ENCODE measurements at regions of chr4 and their contacts with region 1.

Region 1: GRCh38 chr4:27318743-27319142 is 458.1 kb downstream of the STIM2 start:
- DNase-seq: peak; percentile 17
- ATAC-seq: no peak
- H3K4me3 ChIP-seq: no peak overlapping the region
- H3K27ac ChIP-seq: no peak overlapping the region
- H3K4me1 ChIP-seq: no peaks in the 10 kb centered on the region
- H3K27me3 ChIP-seq: no peaks in the 10 kb centered on the region
- CTCF ChIP-seq: peak; percentile 41
- POLR2A ChIP-seq: no peak
- RAD21 ChIP-seq: peak; percentile 54

Region 2: DNA sequence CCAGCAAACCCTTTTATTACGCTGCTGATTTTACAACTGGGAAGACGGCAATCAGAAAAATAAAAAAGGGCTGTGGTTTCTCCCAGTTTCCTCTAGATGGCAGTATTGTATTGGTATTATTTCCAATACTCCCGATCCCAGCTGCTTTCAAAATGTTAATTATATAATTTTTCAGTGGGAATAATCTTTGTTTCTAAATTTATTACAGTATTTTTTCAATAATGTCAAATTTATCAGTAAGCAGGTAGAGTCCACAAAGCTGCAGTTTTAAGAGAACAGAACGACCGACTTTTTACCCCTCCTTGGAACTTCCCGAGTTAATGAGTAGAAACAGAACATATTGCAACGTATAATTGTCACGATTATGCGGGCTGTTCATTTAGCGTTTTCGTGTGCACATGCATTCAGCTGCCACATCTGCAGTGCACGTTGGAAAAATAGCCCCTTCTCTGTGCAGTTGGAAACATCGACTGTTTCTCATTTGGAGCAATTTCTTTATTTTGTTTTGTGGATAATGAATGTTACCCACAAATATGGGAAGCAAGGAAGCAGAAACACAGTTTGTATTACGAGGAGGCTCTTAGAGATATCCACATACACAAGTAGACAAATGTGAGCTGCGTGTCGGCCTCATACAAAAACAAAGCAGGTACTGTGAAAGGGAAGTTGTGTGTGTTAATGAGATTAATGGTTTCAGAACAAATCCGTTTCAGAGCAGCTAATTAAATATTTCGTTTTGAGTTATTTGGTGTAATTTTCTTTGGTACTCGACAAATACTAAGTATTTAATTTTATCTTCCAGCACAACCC is 270.1 kb before region 1 on chr4:
- CTCF ChIA-PET with region 1: no interaction called
- POLR2A ChIA-PET with region 1: no interaction called
- dilution Hi-C with region 1: no loop called
- in situ Hi-C with region 1: no loop called
- intact Hi-C with region 1: loop called (anchors 2 kb)
- DNase-seq: peak; percentile 27
- ATAC-seq: peak; percentile 76
- H3K4me3 ChIP-seq: peak overlapping the region; percentile 44
- H3K27ac ChIP-seq: no peak overlapping the region
- H3K4me1 ChIP-seq: no peaks in the 10 kb centered on the region
- H3K27me3 ChIP-seq: peaks cover 28% of the 10 kb centered on the region
- CTCF ChIP-seq: peak; percentile 76
- POLR2A ChIP-seq: no peak
- RAD21 ChIP-seq: peak; percentile 71

Region 3: GRCh38 chr4:27176400-27176799 is 142.3 kb before region 1 on chr4:
- CTCF ChIA-PET with region 1: no interaction called
- POLR2A ChIA-PET with region 1: no interaction called
- dilution Hi-C with region 1: no loop called
- in situ Hi-C with region 1: no loop called
- intact Hi-C with region 1: loop called (anchors 2 kb)
- DNase-seq: peak; percentile 41
- ATAC-seq: no peak
- H3K4me3 ChIP-seq: no peak overlapping the region
- H3K27ac ChIP-seq: no peak overlapping the region
- H3K4me1 ChIP-seq: no peaks in the 10 kb centered on the region
- H3K27me3 ChIP-seq: no peaks in the 10 kb centered on the region
- CTCF ChIP-seq: peak; percentile 43
- POLR2A ChIP-seq: no peak
- RAD21 ChIP-seq: peak; percentile 60

Region 4: DNA sequence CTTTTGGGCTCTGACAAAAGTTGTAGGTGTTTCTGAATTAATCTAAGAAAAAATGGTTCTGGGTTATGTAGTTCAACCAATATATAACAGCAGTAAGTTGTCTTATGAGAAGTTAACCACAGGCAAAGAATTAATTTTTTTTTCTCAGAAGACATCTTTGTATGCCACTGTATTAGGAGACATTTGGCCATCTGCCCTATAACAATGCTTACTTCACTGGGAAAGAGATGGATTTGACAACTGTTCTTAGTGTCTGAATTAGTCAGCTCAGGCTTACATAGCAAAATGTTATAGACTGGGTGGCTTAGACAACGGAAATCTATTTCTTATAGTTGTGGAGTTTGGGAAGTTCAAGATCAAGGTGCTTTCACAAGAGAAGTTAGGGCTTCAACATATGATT is 50.0 kb after region 1 on chr4:
- CTCF ChIA-PET with region 1: no interaction called
- POLR2A ChIA-PET with region 1: no interaction called
- dilution Hi-C with region 1: no loop called
- in situ Hi-C with region 1: no loop called
- intact Hi-C with region 1: no loop called
- DNase-seq: no peak
- ATAC-seq: no peak
- H3K4me3 ChIP-seq: no peak overlapping the region
- H3K27ac ChIP-seq: no peak overlapping the region
- H3K4me1 ChIP-seq: no peaks in the 10 kb centered on the region
- H3K27me3 ChIP-seq: no peaks in the 10 kb centered on the region
- CTCF ChIP-seq: no peak
- POLR2A ChIP-seq: no peak
- RAD21 ChIP-seq: no peak

Measured in IMR-90 (cell line).